ENCODE measurements at regions of chr1 and their contacts with region 1.

Region 1: GRCh38 chr1:202462342-202463076 is 114.0 kb downstream of the PPP1R12B start:
- DNase-seq: no peak
- H3K4me3 Mint-ChIP-seq: no peak overlapping the region
- H3K27ac Mint-ChIP-seq: no peak overlapping the region
- H3K4me1 Mint-ChIP-seq: no peaks in the 10 kb centered on the region
- H3K27me3 Mint-ChIP-seq: no peaks in the 10 kb centered on the region

Region 2: GRCh38 chr1:202571347-202572339 is 109.1 kb after region 1 on chr1:
- intact Hi-C with region 1: loop called (anchors 5 kb)
- DNase-seq: peak; percentile 78
- H3K4me3 Mint-ChIP-seq: no peak overlapping the region
- H3K27ac Mint-ChIP-seq: no peak overlapping the region
- H3K4me1 Mint-ChIP-seq: peaks cover 5% of the 10 kb centered on the region
- H3K27me3 Mint-ChIP-seq: no peaks in the 10 kb centered on the region

Region 3: DNA sequence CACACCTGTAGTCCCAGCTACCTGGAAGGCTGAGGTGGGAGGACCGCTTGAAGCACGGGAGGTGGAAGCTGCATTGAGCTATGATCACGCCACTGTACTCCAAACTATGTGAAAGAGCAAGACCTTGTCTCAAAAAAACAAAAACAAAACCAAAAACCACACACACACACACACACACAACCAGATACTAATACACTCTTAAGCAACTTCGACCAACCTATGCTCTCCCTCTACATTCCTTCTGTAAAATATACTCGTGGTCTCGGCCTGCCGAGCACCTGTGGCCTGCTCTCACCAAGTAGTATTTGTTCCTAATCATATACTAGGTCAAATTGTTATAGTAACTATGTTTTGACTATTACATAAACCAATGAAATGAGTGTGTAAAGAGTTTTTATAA is 261.2 kb after region 1 on chr1:
- intact Hi-C with region 1: loop called (anchors 5 kb)
- DNase-seq: no peak
- H3K4me3 Mint-ChIP-seq: no peak overlapping the region
- H3K27ac Mint-ChIP-seq: no peak overlapping the region
- H3K4me1 Mint-ChIP-seq: peaks cover 4% of the 10 kb centered on the region
- H3K27me3 Mint-ChIP-seq: peaks cover 3% of the 10 kb centered on the region